Colonic mucosa (tissue), 4 donors: ENCODE measurements at regions of chr15 and their contacts with region 1.

Region 1: GRCh38 chr15:37995461-37996347 is 61.3 kb downstream of the TMCO5A start:
- DNase-seq: no peak
- H3K4me3 ChIP-seq: no peak overlapping the region
- H3K27ac ChIP-seq: no peak overlapping the region
- H3K4me1 ChIP-seq: no peaks in the 10 kb centered on the region
- H3K27me3 ChIP-seq: no peaks in the 10 kb centered on the region
- CTCF ChIP-seq: peak; percentile 35

Region 2: GRCh38 chr15:37814847-37815515 is 180.7 kb before region 1 on chr15:
- intact Hi-C with region 1: no loop called
- DNase-seq: no peak
- H3K4me3 ChIP-seq: no peak overlapping the region
- H3K27ac ChIP-seq: no peak overlapping the region
- H3K4me1 ChIP-seq: no peaks in the 10 kb centered on the region
- H3K27me3 ChIP-seq: no peaks in the 10 kb centered on the region
- CTCF ChIP-seq: no peak

Region 3: DNA sequence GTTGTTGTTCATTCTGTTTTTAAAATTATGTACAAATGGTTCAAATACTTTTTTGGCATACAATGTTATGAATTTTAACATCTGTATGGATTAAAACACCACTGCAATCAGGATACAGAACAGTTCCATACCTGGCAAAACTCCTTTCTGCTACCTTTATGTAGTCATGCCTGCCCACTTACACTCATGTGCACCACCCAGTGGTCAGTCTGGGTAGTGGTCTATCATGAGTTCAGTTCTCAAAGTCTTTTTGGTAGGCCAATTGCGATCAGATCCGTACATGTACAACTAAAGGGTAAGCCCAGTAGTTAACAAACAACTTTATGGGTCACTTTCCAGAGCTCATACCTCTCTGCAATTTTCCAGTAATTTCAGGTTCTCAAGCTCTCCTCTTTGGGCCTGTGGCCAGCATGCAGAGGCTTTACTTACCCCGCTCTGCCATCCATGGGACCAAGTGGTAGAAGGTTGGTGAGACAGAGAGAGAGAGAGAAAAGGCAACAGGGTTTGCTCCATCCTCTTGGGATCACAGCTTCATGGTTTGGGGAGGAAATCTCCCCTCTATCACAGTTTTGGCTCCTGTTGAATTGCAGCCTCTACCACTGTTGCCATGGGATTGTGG is 394.3 kb after region 1 on chr15:
- intact Hi-C with region 1: loop called (anchors 10 kb)
- DNase-seq: peak; percentile 84
- H3K4me3 ChIP-seq: no peak overlapping the region
- H3K27ac ChIP-seq: no peak overlapping the region
- H3K4me1 ChIP-seq: no peaks in the 10 kb centered on the region
- H3K27me3 ChIP-seq: no peaks in the 10 kb centered on the region
- CTCF ChIP-seq: peak; percentile 70

Region 4: GRCh38 chr15:38683382-38684242 is 687.9 kb after region 1 on chr15:
- intact Hi-C with region 1: loop called (anchors 5 kb)
- DNase-seq: peak; percentile 65
- H3K4me3 ChIP-seq: no peak overlapping the region
- H3K27ac ChIP-seq: no peak overlapping the region
- H3K4me1 ChIP-seq: no peaks in the 10 kb centered on the region
- H3K27me3 ChIP-seq: no peaks in the 10 kb centered on the region
- CTCF ChIP-seq: peak; percentile 70